SK-N-SH (cell line): ENCODE measurements at regions of chr17 and their contacts with region 1.

Region 1: GRCh38 chr17:7177196-7177953 is 1.8 kb downstream of the ASGR1 start:
- DNase-seq: peak; percentile 95
- H3K4me3 ChIP-seq: peak overlapping the region; percentile 38 to 56
- H3K27ac ChIP-seq: no peak overlapping the region
- H3K4me1 ChIP-seq: peaks cover 0 to 8% of the 10 kb centered on the region in 2 experiments; a peak in 1 of 4 replicates
- H3K27me3 ChIP-seq: no peaks in the 10 kb centered on the region
- CTCF ChIP-seq: peak; percentile 85
- EP300 ChIP-seq: no peak
- RAD21 ChIP-seq: peak; percentile 81

Region 2: DNA sequence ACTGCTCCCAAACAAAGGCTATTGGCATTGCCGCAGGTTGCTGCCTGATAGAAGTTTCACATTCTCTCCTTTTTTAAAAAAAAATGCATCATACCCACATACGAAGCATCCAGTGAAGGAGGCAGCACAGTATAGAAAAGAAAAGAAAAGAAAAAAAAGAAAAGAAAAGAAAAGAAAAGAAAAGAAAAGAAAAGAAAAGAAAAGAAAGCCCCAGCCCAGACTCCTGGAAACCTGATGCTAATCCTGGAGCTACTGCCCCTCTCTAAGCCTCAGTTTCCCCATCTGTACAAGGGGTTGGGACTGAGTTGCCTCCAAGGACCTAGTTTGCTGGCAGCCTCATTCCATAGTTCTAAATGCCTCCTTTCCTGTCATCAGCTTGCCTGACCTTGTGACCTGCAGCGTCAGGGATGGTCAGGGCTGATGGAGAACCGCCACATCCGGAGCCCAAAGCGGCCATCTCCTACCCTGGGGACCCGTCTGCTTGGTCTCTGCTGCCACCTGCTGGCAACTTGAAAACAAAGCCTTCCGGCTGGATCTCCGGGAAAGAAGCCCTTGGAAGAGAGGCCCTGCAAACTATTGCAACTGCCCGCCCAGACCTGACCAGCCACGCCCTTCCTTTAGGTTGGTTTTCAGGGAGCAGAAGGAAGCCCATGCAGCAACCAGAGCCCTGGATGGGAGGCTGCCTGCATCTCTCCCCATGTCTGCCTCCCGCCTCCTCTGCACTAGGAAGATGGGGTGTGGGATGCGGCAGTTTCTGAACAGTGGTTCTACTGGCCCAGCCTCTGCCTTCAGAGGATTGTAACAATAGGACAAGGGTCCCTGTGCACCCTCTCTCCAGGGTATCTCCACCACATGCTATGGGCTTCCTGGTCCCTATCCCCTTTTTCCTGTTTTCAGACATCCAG is 755.4 kb before region 1 on chr17:
- CTCF ChIA-PET with region 1: no interaction called
- POLR2A ChIA-PET with region 1: no interaction called
- DNase-seq: peak; percentile 89
- H3K4me3 ChIP-seq: no peak overlapping the region; a peak in 1 of 4 replicates
- H3K27ac ChIP-seq: no peak overlapping the region
- H3K4me1 ChIP-seq: no peaks in the 10 kb centered on the region
- H3K27me3 ChIP-seq: peaks cover 55% of the 10 kb centered on the region
- CTCF ChIP-seq: peak; percentile 84
- EP300 ChIP-seq: no peak
- RAD21 ChIP-seq: peak; percentile 93

Region 3: DNA sequence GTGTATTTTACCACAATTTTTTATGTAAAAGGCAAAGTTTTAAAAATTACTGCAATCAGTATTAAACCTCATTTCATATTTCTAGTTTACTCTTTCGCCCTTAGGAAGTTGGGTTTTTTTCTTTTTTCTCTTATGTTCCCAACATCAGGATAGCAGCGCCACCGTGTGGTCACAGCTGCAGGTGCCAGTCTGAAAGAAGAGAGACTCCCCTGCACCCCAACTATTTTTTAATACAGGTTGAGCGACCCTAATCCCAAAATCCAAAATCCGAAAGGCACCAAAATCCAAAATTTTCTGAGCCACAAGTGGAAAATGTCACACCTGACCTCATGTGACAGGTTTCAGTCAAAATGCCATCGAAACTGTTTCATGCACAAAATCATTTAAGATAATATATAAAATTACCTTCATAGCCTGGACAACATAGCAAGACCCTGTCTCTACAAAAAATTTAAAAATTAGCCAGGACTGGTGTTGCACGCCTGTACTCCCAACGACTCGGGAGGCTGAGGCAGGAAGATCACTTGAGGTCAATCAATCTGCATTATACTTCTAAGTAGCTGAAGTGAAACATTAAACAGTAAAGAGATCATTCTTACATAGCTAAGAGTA is 41.0 kb before region 1 on chr17:
- CTCF ChIA-PET with region 1: interaction called, 26 read pairs
- POLR2A ChIA-PET with region 1: no interaction called
- DNase-seq: peak; percentile 70
- H3K4me3 ChIP-seq: peak overlapping the region in 1 of 2 experiments; percentile 36; a peak in 1 of 4 replicates
- H3K27ac ChIP-seq: no peak overlapping the region
- H3K4me1 ChIP-seq: no peaks in the 10 kb centered on the region
- H3K27me3 ChIP-seq: peaks cover 88% of the 10 kb centered on the region
- CTCF ChIP-seq: peak; percentile 99
- EP300 ChIP-seq: no peak
- RAD21 ChIP-seq: peak; percentile 86

Region 4: DNA sequence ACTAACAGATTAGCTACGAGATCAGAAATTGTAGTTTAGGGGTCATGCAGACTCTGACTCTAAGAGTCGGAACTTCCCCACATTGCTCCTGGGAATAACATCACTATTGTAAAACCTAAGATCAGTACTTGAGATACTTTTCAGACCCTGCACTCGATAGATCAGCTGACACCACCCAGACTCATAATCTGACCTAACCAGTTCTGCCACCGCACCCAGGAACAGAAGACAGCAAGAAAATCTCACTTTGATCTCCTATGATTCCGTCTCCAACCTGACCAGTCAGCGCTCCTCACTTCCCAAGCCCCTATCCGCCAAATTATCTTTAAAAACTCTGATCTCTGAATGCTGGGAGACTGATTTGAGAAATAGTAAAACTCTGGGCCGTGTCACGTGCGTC is 35.6 kb before region 1 on chr17:
- CTCF ChIA-PET with region 1: interaction called, 26 read pairs
- POLR2A ChIA-PET with region 1: no interaction called
- DNase-seq: no peak
- H3K4me3 ChIP-seq: no peak overlapping the region
- H3K27ac ChIP-seq: no peak overlapping the region
- H3K4me1 ChIP-seq: no peaks in the 10 kb centered on the region
- H3K27me3 ChIP-seq: peaks cover 92% of the 10 kb centered on the region
- CTCF ChIP-seq: no peak
- EP300 ChIP-seq: no peak
- RAD21 ChIP-seq: no peak

Region 5: GRCh38 chr17:7147772-7148171 is 29.6 kb before region 1 on chr17:
- CTCF ChIA-PET with region 1: interaction called, 14 read pairs
- POLR2A ChIA-PET with region 1: no interaction called
- DNase-seq: no peak
- H3K4me3 ChIP-seq: no peak overlapping the region
- H3K27ac ChIP-seq: no peak overlapping the region
- H3K4me1 ChIP-seq: no peaks in the 10 kb centered on the region
- H3K27me3 ChIP-seq: peaks cover 73% of the 10 kb centered on the region
- CTCF ChIP-seq: no peak
- EP300 ChIP-seq: no peak
- RAD21 ChIP-seq: no peak

Region 6: GRCh38 chr17:7191571-7192270 is 14.3 kb after region 1 on chr17:
- CTCF ChIA-PET with region 1: interaction called, 18 read pairs
- POLR2A ChIA-PET with region 1: interaction called, 4 read pairs
- DNase-seq: peak; percentile 86
- H3K4me3 ChIP-seq: no peak overlapping the region
- H3K27ac ChIP-seq: no peak overlapping the region
- H3K4me1 ChIP-seq: no peaks in the 10 kb centered on the region
- H3K27me3 ChIP-seq: no peaks in the 10 kb centered on the region
- CTCF ChIP-seq: no peak
- EP300 ChIP-seq: no peak
- RAD21 ChIP-seq: no peak

Region 7: GRCh38 chr17:7204828-7205461 is 27.6 kb after region 1 on chr17:
- CTCF ChIA-PET with region 1: interaction called, 10 read pairs
- POLR2A ChIA-PET with region 1: no interaction called
- DNase-seq: peak; percentile 99
- H3K4me3 ChIP-seq: peak overlapping the region; percentile 39 to 47
- H3K27ac ChIP-seq: peak overlapping the region; percentile 34 to 91
- H3K4me1 ChIP-seq: peaks cover 0 to 13% of the 10 kb centered on the region in 2 experiments; a peak in 2 of 4 replicates
- H3K27me3 ChIP-seq: no peaks in the 10 kb centered on the region
- CTCF ChIP-seq: no peak
- EP300 ChIP-seq: no peak
- RAD21 ChIP-seq: no peak

Region 8: GRCh38 chr17:7214300-7215135 is 37.1 kb after region 1 on chr17:
- CTCF ChIA-PET with region 1: interaction called, 12 read pairs
- POLR2A ChIA-PET with region 1: no interaction called
- DNase-seq: peak; percentile 91
- H3K4me3 ChIP-seq: peak overlapping the region; percentile 56 to 64
- H3K27ac ChIP-seq: peak overlapping the region; percentile 88 to 96
- H3K4me1 ChIP-seq: peaks cover 26 to 54% of the 10 kb centered on the region in 2 experiments; a peak in 3 of 4 replicates
- H3K27me3 ChIP-seq: no peaks in the 10 kb centered on the region
- CTCF ChIP-seq: peak; percentile 64
- EP300 ChIP-seq: no peak; a peak in 1 of 4 replicates
- RAD21 ChIP-seq: peak; percentile 24; the same call in 1 of the 2 replicates